Activated CD4-positive, alpha-beta memory T cell treated with anti-CD3 and anti-CD28 coated beads for 36 hours (primary cell): ENCODE measurements at regions of chr9 and their contacts with region 1.

Region 1: DNA sequence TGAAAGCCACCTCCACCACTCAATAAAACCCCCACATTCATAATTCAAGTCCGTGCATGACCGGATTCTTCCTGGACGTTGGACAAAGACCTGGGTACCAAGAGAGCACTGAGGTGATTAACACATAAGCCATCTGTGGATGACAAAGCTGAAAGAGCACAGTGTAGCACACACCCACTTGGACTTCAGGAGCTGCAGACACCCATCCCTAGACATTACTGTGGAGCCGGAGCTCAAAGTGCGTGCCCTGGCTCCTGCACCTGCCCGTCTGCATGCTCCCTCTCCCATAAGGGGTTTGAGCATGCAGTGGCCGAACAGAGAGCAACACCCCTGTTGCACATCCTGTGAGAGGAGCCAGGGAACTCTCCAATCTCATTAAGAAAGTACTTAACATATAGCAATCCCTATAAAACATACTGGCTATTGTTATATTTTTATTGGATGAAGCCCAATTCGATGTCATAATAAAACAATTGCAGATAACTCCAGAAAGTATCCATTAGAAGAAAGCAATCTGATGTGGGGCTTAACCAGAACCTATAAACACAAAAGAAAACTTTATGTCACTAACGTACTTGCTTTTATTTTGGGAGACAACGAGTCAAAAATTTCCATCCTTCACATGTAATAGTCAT is 1174.2 kb upstream of the C9orf72 start:
- DNase-seq: no peak
- H3K4me3 Mint-ChIP-seq: no peak overlapping the region
- H3K27ac Mint-ChIP-seq: no peak overlapping the region
- H3K4me1 Mint-ChIP-seq: no peaks in the 10 kb centered on the region
- H3K27me3 Mint-ChIP-seq: no peaks in the 10 kb centered on the region

Region 2: DNA sequence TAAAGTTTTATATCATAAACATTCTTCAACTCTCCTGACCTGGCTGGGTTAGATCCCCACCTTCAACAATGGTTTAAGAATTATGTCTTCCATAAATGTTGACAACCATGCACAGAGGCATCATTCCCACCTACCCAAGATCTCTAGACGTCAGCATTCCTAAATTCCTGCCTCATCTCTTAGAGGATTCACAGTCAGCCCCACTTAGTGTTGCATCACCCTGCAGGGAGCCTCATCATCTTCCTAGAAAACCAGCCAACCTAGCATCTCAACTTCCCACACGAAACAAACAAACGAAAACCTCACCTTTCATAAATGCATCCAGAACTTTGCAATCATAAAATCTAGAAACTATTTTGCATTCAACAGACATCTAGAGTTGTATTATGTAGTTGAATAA is 358.1 kb before region 1 on chr9:
- CTCF ChIA-PET with region 1: no interaction called
- POLR2A ChIA-PET with region 1: no interaction called
- intact Hi-C with region 1: no loop called
- DNase-seq: no peak
- H3K4me3 Mint-ChIP-seq: no peak overlapping the region
- H3K27ac Mint-ChIP-seq: no peak overlapping the region
- H3K4me1 Mint-ChIP-seq: no peaks in the 10 kb centered on the region
- H3K27me3 Mint-ChIP-seq: no peaks in the 10 kb centered on the region

Region 3: DNA sequence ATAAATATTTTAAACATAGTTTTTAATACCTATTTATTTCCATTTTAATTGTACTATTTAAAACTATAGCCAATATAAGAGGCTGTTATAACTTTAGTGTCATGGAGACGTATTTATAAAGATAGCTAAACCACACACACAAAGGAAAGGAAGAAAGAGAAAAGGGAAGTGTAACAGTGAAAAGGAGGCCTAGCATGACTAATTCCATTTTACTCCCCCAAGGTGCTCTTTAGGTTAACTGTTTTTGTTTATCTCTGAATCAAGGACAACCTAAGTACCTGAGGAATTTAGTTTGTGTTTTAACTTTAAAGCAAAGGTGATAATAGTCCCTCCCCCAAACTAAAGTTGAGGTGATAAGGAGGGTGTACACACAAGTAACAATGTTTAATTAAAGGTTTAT is 14.7 kb after region 1 on chr9:
- CTCF ChIA-PET with region 1: no interaction called
- POLR2A ChIA-PET with region 1: no interaction called
- intact Hi-C with region 1: loop called (anchors 2 kb)
- DNase-seq: no peak
- H3K4me3 Mint-ChIP-seq: no peak overlapping the region
- H3K27ac Mint-ChIP-seq: no peak overlapping the region
- H3K4me1 Mint-ChIP-seq: no peaks in the 10 kb centered on the region
- H3K27me3 Mint-ChIP-seq: no peaks in the 10 kb centered on the region